Activated B cell treated with CpG ODN at 0.5 μM for 24 hours (primary cell): ENCODE measurements at regions of chr2 and their contacts with region 1.

Region 1: DNA sequence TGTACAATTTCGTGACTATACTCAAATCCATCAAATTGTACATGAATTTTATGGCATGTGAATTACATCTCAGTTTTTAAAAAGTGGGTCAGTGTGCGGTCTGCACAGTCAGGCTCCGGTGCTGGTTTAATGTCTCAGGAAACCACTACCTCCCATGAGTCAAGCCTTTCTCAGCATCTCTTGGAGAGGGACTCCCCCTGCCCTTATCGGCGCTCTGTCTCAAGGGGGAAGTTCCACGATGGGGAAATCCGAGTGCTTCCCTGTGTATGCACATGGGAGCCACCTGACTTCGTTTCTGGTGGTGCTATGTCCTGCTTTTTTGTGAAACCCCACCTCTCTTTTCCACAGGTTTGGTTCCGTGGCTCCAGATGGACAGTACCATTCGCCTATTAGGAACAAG is 72.5 kb downstream of the ACOXL start:
- DNase-seq: peak; percentile 46
- ATAC-seq: peak; percentile 85
- H3K4me3 Mint-ChIP-seq: peak overlapping the region; percentile 47
- H3K27ac Mint-ChIP-seq: peak overlapping the region; percentile 67
- H3K4me1 Mint-ChIP-seq: peaks cover 31% of the 10 kb centered on the region
- H3K27me3 Mint-ChIP-seq: peaks cover 39% of the 10 kb centered on the region
- CTCF ChIP-seq: no peak

Region 2: DNA sequence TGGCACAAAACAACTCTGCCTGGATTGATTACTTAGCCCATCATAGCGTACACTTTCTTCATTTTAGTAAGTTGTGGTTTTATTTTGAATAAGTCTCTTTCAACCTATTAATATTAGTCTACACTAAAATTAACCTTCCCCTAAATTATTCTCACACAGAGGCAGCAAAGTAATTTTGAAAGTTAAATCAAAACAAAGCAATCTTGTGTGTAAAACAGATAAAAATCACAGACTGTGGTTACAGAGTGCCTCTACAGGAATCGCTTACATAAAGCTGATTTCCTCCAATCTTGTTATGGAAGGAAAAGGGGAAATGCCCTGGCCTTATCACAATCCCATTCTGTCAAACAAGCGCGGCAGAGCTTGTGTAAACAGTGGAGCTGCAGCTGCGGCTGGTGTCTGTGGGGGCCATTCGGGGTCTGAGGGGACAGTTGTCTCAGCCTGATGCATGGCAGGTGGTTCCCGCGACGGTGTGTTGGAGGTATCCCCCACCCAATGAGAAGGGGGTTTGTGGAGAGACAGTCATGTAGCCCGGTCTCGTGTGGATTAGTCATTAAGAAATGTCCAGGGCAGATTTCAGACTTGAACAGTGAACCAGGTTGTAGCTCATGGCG is 357.9 kb after region 1 on chr2:
- CTCF ChIA-PET with region 1: no interaction called
- POLR2A ChIA-PET with region 1: interaction called, 10 read pairs
- intact Hi-C with region 1: no loop called
- DNase-seq: no peak
- ATAC-seq: peak; percentile 49
- H3K4me3 Mint-ChIP-seq: peak overlapping the region; percentile 56
- H3K27ac Mint-ChIP-seq: peak overlapping the region; percentile 70
- H3K4me1 Mint-ChIP-seq: peaks cover 56% of the 10 kb centered on the region
- H3K27me3 Mint-ChIP-seq: no peaks in the 10 kb centered on the region
- CTCF ChIP-seq: no peak